Activated CD4-positive, alpha-beta memory T cell treated with anti-CD3 and anti-CD28 coated beads for 36 hours (primary cell): ENCODE measurements at regions of chr11 and their contacts with region 1.

Region 1: GRCh38 chr11:6737872-6738466 is 33.8 kb downstream of the OR2AG2 start:
- DNase-seq: peak; percentile 67
- H3K4me3 Mint-ChIP-seq: no peak overlapping the region
- H3K27ac Mint-ChIP-seq: peak overlapping the region; percentile 53
- H3K4me1 Mint-ChIP-seq: peaks cover 89% of the 10 kb centered on the region
- H3K27me3 Mint-ChIP-seq: no peaks in the 10 kb centered on the region

Region 2: GRCh38 chr11:6258571-6259081 is 479.3 kb before region 1 on chr11:
- CTCF ChIA-PET with region 1: no interaction called
- POLR2A ChIA-PET with region 1: no interaction called
- intact Hi-C with region 1: no loop called
- DNase-seq: peak; percentile 28
- H3K4me3 Mint-ChIP-seq: no peak overlapping the region
- H3K27ac Mint-ChIP-seq: no peak overlapping the region
- H3K4me1 Mint-ChIP-seq: no peaks in the 10 kb centered on the region
- H3K27me3 Mint-ChIP-seq: peaks cover 11% of the 10 kb centered on the region

Region 3: DNA sequence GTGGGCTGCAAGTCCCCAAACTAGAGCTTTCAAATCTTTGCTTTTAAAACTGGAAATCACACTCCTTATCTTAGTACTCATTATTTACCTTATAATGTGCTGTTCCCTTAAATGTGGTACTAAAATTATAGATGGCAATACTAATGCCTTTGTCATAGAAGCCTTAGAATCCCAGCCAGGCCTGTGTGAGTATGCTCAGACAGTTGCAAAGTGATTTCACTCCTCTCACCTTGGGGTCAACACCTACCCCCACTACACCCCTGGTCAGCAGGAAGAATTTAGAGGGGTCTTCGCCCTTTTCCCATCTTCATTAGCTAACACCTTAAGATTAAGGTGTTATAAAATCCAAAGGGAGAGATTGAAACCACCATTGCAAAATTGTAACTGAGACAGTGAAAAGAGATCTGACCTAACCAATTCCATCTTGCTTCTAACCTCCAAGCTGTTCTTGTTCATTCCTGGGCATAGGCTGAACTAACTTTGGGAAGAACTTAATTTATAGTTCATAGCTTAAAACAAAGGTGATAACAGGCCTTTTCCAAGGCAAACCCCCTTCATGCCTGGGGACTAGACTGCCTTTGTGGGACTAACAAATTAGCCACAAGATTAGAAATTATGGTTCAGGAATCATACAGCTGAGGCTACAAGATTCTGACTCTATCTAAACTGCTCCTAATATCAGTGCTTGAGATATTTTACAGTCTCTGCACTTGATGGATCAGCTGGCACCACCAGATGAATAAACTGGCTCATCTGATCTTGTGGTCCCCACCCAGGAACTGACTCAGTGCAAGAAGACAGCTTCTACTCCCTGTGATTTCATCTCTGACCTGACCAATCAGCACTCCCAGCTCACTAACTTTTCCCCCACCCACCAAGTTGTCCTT is 44.4 kb before region 1 on chr11:
- CTCF ChIA-PET with region 1: interaction called, 5 read pairs
- POLR2A ChIA-PET with region 1: interaction called, 3 read pairs
- intact Hi-C with region 1: loop called (anchors 1 kb)
- DNase-seq: peak; percentile 83
- H3K4me3 Mint-ChIP-seq: peak overlapping the region; percentile 4
- H3K27ac Mint-ChIP-seq: peak overlapping the region; percentile 72
- H3K4me1 Mint-ChIP-seq: peaks cover 42% of the 10 kb centered on the region
- H3K27me3 Mint-ChIP-seq: no peaks in the 10 kb centered on the region

Region 4: DNA sequence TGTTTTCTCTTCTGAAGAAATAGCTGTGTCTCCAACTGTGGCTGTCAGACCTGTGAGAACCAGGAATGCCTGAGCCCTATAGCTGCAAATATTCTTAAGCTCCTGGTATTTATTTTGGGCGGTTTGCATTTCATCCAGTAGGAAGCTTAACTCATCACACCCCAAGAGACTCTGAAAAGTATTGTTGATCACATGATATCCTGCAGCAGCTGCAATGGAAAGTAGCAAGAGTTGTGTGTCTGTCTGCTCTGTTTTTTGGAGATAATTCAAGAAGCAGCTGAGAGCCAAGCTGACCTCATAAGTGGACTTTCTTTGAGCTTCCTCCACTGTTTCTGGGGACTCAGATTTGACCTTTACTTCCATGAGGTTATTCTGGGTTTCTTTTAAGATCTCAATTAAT is 18.4 kb before region 1 on chr11:
- CTCF ChIA-PET with region 1: interaction called, 14 read pairs
- POLR2A ChIA-PET with region 1: interaction called, 3 read pairs
- intact Hi-C with region 1: loop called (anchors 1 kb)
- DNase-seq: no peak
- H3K4me3 Mint-ChIP-seq: no peak overlapping the region
- H3K27ac Mint-ChIP-seq: no peak overlapping the region
- H3K4me1 Mint-ChIP-seq: peaks cover 71% of the 10 kb centered on the region
- H3K27me3 Mint-ChIP-seq: no peaks in the 10 kb centered on the region